ENCODE measurements at regions of chr15 and their contacts with region 1.

Region 1: GRCh38 chr15:38002883-38003477 is 68.5 kb downstream of the TMCO5A start:
- DNase-seq: peak; percentile 77
- H3K4me3 ChIP-seq: no peak overlapping the region
- H3K27ac ChIP-seq: no peak overlapping the region
- H3K4me1 ChIP-seq: no peaks in the 10 kb centered on the region
- CTCF ChIP-seq: peak; percentile 87

Region 2: DNA sequence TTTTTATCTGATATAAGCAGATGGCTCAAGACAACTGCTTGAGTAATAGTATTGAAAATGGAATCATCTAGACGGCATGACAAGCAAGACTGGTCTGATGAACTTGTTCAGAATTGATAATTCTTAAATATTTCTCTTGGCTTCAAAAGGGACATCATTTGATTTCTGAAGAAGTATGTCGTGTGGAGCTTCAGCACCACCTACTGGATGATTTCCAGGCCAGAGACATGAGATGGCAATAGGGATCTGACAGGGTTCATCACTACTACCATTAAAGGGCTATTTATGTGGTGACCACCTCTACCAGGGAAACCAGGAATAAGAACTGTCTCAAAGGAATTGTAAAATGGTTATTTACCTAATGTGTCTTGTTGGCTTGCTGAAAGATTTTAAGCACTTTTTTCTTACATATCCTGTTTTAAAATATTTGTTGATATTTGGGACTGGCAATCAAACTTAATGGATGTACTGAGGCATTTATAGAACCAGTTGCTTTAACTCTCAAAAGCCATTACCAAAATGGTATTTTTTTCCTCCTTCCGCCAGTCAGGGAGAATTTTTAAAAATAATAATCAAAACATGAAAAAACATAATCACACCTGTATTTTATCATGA is 351.4 kb after region 1 on chr15:
- CTCF ChIA-PET with region 1: no interaction called
- POLR2A ChIA-PET with region 1: interaction called, 4 read pairs
- intact Hi-C with region 1: loop called (anchors 1 kb)
- DNase-seq: peak; percentile 74
- H3K4me3 ChIP-seq: no peak overlapping the region
- H3K27ac ChIP-seq: no peak overlapping the region
- H3K4me1 ChIP-seq: no peaks in the 10 kb centered on the region
- CTCF ChIP-seq: peak; percentile 95

Region 3: DNA sequence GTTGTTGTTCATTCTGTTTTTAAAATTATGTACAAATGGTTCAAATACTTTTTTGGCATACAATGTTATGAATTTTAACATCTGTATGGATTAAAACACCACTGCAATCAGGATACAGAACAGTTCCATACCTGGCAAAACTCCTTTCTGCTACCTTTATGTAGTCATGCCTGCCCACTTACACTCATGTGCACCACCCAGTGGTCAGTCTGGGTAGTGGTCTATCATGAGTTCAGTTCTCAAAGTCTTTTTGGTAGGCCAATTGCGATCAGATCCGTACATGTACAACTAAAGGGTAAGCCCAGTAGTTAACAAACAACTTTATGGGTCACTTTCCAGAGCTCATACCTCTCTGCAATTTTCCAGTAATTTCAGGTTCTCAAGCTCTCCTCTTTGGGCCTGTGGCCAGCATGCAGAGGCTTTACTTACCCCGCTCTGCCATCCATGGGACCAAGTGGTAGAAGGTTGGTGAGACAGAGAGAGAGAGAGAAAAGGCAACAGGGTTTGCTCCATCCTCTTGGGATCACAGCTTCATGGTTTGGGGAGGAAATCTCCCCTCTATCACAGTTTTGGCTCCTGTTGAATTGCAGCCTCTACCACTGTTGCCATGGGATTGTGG is 387.1 kb after region 1 on chr15:
- CTCF ChIA-PET with region 1: no interaction called
- POLR2A ChIA-PET with region 1: interaction called, 3 read pairs
- intact Hi-C with region 1: loop called (anchors 2 kb)
- DNase-seq: peak; percentile 68
- H3K4me3 ChIP-seq: no peak overlapping the region
- H3K27ac ChIP-seq: no peak overlapping the region
- H3K4me1 ChIP-seq: no peaks in the 10 kb centered on the region
- CTCF ChIP-seq: peak; percentile 95